Mammary epithelial cell (primary cell): ENCODE measurements at regions of chr6 and their contacts with region 1.

Region 1: DNA sequence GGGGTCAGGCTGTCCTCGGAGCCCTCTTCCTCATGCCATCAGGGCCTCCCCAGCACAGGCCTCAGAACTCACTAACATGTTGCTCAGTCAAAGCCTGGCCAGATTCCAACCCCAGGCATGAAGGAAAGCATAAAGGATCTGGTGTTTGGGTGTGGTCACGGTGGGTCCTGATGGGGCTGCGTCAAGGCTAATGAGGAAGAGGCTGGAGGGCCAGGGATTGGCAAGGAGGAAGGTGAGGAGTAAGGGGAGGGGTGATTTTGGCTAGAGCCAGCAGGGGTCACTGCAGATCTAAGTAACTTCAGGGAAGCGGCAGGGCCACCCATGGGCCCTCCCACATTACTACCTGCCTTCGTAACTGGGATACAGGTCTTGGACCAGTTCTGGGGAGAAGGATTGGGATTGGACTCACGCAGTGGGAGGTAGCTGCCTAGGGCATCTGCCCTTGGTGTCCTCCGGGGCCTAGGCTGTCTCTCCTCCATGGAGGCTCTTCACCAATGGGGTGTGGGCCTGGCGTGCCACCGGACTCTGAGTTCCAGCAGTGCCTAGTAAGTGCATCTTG is 36.2 kb upstream of the MRPS18A start:
- DNase-seq: peak; percentile 76
- H3K4me3 ChIP-seq: no peak overlapping the region
- H3K27ac ChIP-seq: no peak overlapping the region
- H3K4me1 ChIP-seq: peaks cover 31% of the 10 kb centered on the region
- H3K27me3 ChIP-seq: no peaks in the 10 kb centered on the region
- CTCF ChIP-seq: peak; percentile 75 to 84

Region 2: DNA sequence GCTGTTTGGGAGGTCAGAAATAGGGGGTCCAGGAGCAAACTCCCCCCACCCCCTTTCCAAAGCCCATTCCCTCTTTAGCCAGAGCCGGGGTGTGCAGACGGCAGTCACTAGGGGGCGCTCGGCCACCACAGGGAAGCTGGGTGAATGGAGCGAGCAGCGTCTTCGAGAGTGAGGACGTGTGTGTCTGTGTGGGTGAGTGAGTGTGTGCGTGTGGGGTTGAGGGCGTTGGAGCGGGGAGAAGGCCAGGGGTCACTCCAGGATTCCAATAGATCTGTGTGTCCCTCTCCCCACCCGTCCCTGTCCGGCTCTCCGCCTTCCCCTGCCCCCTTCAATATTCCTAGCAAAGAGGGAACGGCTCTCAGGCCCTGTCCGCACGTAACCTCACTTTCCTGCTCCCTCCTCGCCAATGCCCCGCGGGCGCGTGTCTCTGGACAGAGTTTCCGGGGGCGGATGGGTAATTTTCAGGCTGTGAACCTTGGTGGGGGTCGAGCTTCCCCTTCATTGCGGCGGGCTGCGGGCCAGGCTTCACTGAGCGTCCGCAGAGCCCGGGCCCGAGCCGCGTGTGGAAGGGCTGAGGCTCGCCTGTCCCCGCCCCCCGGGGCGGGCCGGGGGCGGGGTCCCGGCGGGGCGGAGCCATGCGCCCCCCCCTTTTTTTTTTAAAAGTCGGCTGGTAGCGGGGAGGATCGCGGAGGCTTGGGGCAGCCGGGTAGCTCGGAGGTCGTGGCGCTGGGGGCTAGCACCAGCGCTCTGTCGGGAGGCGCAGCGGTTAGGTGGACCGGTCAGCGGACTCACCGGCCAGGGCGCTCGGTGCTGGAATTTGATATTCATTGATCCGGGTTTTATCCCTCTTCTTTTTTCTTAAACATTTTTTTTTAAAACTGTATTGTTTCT is 46.0 kb after region 1 on chr6 and contains the start of gene VEGFA:
- CTCF ChIA-PET with region 1: interaction called, 5 read pairs
- dilution Hi-C with region 1: no loop called
- in situ Hi-C with region 1: loop called in 1 of 2 experiments (anchors 5 kb)
- intact Hi-C with region 1: loop called (anchors 1 kb)
- DNase-seq: peak; percentile 84
- H3K4me3 ChIP-seq: peak within 1 kb of the TSS; percentile 97 to 98 (median 98)
- H3K27ac ChIP-seq: peak within 1 kb of the TSS; percentile 77
- H3K4me1 ChIP-seq: peaks cover 21% of the 10 kb centered on the region
- H3K27me3 ChIP-seq: no peaks in the 10 kb centered on the region
- CTCF ChIP-seq: peak; percentile 98
- total RNA-seq, gene VEGFA: 161 to 313 TPM

Region 3: GRCh38 chr6:43798688-43799444 is 75.0 kb after region 1 on chr6:
- CTCF ChIA-PET with region 1: interaction called, 6 read pairs
- dilution Hi-C with region 1: no loop called
- in situ Hi-C with region 1: no loop called
- intact Hi-C with region 1: loop called (anchors 1 kb)
- DNase-seq: peak; percentile 85
- H3K4me3 ChIP-seq: no peak overlapping the region
- H3K27ac ChIP-seq: no peak overlapping the region
- H3K4me1 ChIP-seq: peaks cover 17% of the 10 kb centered on the region
- H3K27me3 ChIP-seq: no peaks in the 10 kb centered on the region
- CTCF ChIP-seq: no peak

Region 4: DNA sequence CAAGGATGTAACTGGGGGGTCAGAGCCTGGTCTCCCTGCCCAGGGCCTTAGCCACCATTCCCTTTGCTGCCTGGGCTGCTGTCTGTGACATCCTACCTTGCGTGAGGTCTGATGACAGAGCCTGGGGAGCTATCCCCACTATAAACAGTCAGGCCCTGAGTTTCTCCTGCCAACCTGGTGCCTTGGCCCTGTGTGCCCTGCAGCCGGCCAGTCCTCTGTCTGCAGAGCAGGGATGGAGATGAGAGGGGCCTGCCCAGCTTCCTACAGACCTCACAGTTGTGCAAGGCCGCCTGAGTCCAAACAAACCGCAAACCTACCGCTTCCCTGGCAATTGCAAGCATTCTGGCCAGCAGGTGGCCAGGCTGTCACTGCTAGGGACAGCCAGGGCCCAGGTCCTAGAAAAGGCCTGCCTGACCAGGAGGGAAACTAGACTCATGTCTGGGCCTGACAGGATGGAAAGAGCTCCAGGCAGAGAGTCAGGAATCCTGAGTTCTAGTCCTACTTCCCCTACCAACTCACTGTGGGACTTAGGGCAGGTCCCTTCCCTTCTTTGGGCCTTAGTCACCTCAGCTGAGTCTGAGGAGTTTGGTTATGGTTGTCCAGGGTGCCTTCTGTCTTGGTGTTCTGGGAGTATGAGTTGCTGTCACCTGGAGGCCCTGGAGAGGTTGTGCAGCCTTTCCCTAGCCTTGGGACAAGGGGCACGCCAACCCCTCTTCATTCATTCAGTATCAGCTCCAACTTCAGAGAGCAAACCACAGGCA is 132.4 kb after region 1 on chr6:
- CTCF ChIA-PET with region 1: interaction called, 3 read pairs
- dilution Hi-C with region 1: no loop called
- in situ Hi-C with region 1: no loop called
- intact Hi-C with region 1: loop called (anchors 5 kb)
- DNase-seq: peak; percentile 45
- H3K4me3 ChIP-seq: no peak overlapping the region
- H3K27ac ChIP-seq: no peak overlapping the region
- H3K4me1 ChIP-seq: peaks cover 7% of the 10 kb centered on the region
- H3K27me3 ChIP-seq: no peaks in the 10 kb centered on the region
- CTCF ChIP-seq: peak; percentile 36 to 61

Region 5: DNA sequence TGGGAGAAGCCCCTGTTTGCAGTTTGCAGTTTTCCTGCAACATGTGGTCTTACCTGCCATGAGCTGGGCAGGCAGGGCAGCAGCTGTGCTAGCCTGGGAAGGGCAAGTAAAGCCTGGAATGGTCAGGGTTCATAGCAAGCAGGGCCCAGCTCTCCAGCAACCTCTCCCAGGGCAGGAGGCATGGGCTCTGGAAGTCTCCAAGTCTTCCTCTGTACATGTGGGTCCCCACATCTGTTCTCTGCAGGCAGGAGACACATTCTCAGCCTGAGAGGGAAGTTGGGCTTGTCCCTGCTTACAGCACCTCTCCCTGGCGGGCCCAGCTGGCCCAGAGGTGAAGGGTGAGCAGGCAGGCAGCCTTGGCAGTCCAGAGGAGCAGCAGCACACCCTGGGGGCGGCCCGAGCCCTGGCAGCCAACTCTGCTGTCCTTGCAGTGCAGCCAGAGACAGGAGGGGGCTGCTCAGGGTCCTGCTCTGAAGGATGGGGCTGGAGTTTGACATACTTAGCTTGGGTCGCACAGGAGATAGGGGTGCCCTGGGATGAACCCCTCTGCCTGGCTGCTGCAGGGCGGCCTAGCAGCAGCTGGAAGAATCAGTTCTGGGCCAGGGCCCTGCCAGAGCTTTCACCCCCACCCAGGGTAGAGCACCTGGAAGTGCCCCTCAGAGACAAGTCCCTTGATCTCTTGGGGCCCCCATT is 227.4 kb after region 1 on chr6:
- CTCF ChIA-PET with region 1: interaction called, 3 read pairs
- dilution Hi-C with region 1: no loop called
- in situ Hi-C with region 1: no loop called
- intact Hi-C with region 1: loop called (anchors 1 kb)
- DNase-seq: no peak
- H3K4me3 ChIP-seq: no peak overlapping the region
- H3K27ac ChIP-seq: no peak overlapping the region
- H3K4me1 ChIP-seq: no peaks in the 10 kb centered on the region
- H3K27me3 ChIP-seq: no peaks in the 10 kb centered on the region
- CTCF ChIP-seq: peak; percentile 17 to 40